ENCODE measurements at regions of chr16 and their contacts with region 1.

Region 1: DNA sequence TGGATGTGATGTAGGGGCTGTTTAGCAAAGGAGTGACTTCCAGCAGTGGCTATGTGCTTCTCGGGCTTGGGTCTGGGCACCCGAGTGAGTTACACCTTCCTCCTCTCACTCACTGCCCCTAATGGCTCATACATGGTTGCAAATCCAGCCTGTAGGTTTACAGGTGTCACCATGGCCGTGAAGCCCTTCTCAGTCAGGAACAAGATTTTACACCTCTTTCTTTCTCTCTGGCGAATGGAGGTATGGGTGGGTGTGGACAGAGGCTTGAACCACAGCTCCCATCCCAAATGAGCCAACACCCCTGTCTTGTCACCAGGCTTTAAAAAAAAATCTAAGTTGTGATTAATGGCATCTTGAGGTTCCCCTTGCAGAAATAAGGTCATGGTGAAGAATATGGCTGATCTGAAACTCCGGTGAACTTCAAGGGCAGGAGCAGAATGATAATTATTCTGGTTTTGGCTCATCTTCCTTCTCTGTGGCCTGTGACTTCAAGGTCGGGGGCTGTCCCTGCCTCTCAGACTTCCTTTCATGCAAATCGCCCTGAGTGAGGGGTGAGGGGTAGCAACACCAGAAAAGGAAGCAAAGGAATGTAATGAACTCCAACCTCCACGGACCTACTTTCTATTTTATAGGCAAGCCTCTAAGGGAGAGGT is 331.2 kb downstream of the MAF start:
- DNase-seq: peak; percentile 72
- ATAC-seq: peak; percentile 16
- H3K4me3 Mint-ChIP-seq: peak overlapping the region; percentile 69
- H3K27ac Mint-ChIP-seq: peak overlapping the region; percentile 93
- H3K4me1 Mint-ChIP-seq: peaks cover 76% of the 10 kb centered on the region
- H3K27me3 Mint-ChIP-seq: peaks cover 27% of the 10 kb centered on the region

Region 2: GRCh38 chr16:79098907-79099306 is 170.4 kb before region 1 on chr16:
- CTCF ChIA-PET with region 1: no interaction called
- POLR2A ChIA-PET with region 1: no interaction called
- DNase-seq: no peak
- ATAC-seq: no peak
- H3K4me3 Mint-ChIP-seq: no peak overlapping the region
- H3K27ac Mint-ChIP-seq: no peak overlapping the region
- H3K4me1 Mint-ChIP-seq: peaks cover 6% of the 10 kb centered on the region
- H3K27me3 Mint-ChIP-seq: peaks cover 33% of the 10 kb centered on the region

Region 3: GRCh38 chr16:79163691-79164387 is 105.5 kb before region 1 on chr16:
- CTCF ChIA-PET with region 1: no interaction called
- POLR2A ChIA-PET with region 1: no interaction called
- DNase-seq: no peak
- ATAC-seq: peak; percentile 49
- H3K4me3 Mint-ChIP-seq: peak overlapping the region; percentile 69
- H3K27ac Mint-ChIP-seq: peak overlapping the region; percentile 62
- H3K4me1 Mint-ChIP-seq: peaks cover 16% of the 10 kb centered on the region
- H3K27me3 Mint-ChIP-seq: no peaks in the 10 kb centered on the region

Region 4: DNA sequence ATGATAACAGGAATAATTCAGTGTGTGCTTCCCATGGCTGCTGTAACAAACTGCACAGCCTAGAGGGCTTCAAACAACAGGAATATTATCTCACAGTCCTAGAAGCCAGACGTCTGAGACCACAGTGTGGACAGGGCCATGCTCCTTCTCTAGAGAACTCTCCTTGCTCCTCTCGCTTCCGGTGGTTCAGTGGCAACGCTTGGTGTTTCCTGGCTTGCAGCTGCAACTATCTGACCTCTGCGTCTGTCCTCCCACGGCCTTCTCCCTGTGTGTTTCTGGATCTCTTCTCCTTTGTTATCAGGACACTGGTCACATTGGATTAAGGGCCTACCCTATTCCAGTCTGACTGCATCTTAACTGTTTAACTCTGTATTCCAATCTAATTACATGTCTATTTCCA is 83.1 kb before region 1 on chr16:
- CTCF ChIA-PET with region 1: no interaction called
- POLR2A ChIA-PET with region 1: no interaction called
- DNase-seq: no peak
- ATAC-seq: no peak
- H3K4me3 Mint-ChIP-seq: no peak overlapping the region
- H3K27ac Mint-ChIP-seq: no peak overlapping the region
- H3K4me1 Mint-ChIP-seq: peaks cover 11% of the 10 kb centered on the region
- H3K27me3 Mint-ChIP-seq: peaks cover 7% of the 10 kb centered on the region

Region 5: GRCh38 chr16:79286646-79287423 is 17.5 kb after region 1 on chr16:
- CTCF ChIA-PET with region 1: interaction called, 26 read pairs
- POLR2A ChIA-PET with region 1: interaction called, 4 read pairs
- DNase-seq: peak; percentile 33
- ATAC-seq: peak; percentile 68
- H3K4me3 Mint-ChIP-seq: peak overlapping the region; percentile 20
- H3K27ac Mint-ChIP-seq: peak overlapping the region; percentile 70
- H3K4me1 Mint-ChIP-seq: peaks cover 46% of the 10 kb centered on the region
- H3K27me3 Mint-ChIP-seq: peaks cover 11% of the 10 kb centered on the region

Region 6: GRCh38 chr16:79328402-79329165 is 59.2 kb after region 1 on chr16:
- CTCF ChIA-PET with region 1: no interaction called
- POLR2A ChIA-PET with region 1: no interaction called
- DNase-seq: no peak
- ATAC-seq: no peak
- H3K4me3 Mint-ChIP-seq: no peak overlapping the region
- H3K27ac Mint-ChIP-seq: no peak overlapping the region
- H3K4me1 Mint-ChIP-seq: no peaks in the 10 kb centered on the region
- H3K27me3 Mint-ChIP-seq: peaks cover 59% of the 10 kb centered on the region

Measured in activated CD8-positive, alpha-beta T cell treated with anti-CD3 and anti-CD28 coated beads, Interleukin-2, amount 10 ng/mL, durations not matched to agents 7 days and 5 days (primary cell).